HEK293 (cell line): ENCODE measurements at regions of chr1 and their contacts with region 1.

Region 1: DNA sequence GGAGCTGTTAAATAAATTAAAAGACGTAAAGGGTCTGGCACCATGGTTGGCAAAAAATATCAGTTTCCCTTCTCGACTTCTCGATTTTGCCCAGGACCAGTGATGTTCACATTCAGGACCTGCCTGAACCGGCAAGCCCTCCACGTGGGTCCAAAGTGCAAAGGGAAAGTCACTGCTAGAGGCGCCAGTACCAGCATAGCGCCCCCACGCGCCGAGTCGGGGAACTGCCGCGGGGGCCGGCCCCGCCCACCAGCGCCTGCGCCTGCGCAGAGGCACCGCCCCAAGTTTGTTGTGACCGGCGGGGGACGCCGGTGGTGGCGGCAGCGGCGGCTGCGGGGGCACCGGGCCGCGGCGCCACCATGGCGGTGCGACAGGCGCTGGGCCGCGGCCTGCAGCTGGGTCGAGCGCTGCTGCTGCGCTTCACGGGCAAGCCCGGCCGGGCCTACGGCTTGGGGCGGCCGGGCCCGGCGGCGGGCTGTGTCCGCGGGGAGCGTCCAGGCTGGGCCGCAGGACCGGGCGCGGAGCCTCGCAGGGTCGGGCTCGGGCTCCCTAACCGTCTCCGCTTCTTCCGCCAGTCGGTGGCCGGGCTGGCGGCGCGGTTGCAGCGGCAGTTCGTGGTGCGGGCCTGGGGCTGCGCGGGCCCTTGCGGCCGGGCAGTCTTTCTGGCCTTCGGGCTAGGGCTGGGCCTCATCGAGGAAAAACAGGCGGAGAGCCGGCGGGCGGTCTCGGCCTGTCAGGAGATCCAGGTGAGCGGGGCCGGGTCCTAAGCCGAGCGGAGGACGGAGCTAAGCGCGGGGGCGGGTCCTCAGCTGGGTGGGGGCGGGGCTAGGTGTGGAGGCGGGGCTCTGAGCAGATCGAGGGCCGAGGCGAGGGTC is at the start of gene PINK1:
- H3K4me3 ChIP-seq: peak within 1 kb of the TSS; percentile 81
- H3K27ac ChIP-seq: peak within 1 kb of the TSS; percentile 95
- H3K4me1 ChIP-seq: no peaks in the 10 kb centered on the region
- CTCF ChIP-seq: peak; percentile 94

Region 2: DNA sequence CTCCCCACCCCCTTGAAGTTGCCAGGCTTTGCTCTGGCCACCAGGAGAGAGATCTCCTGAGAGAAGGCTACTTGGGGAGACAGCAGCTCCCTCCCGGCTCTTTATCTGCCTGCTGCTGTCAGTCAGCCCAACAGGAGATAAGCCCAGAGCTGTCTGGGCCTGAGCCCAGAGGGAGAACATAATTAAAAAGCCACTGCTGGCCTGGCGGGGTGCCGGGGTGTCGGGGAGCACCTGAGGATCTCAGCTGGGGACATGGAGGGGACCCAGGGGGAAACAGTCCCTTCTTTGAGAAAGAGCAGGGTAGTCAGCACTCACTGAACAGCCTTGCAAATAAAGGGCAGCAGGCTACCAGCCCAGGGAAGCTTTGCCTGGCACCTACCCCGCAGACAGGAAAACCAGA is 324.9 kb before region 1 on chr1:
- CTCF ChIA-PET with region 1: no interaction called
- POLR2A ChIA-PET with region 1: no interaction called
- H3K4me3 ChIP-seq: no peak overlapping the region
- H3K27ac ChIP-seq: no peak overlapping the region
- H3K4me1 ChIP-seq: no peaks in the 10 kb centered on the region
- CTCF ChIP-seq: no peak

Region 3: GRCh38 chr1:20521960-20522861 is 111.2 kb before region 1 on chr1:
- CTCF ChIA-PET with region 1: interaction called, 36 read pairs
- POLR2A ChIA-PET with region 1: interaction called, 3 read pairs
- H3K4me3 ChIP-seq: no peak overlapping the region
- H3K27ac ChIP-seq: no peak overlapping the region
- H3K4me1 ChIP-seq: no peaks in the 10 kb centered on the region
- CTCF ChIP-seq: peak; percentile 88

Region 4: GRCh38 chr1:20574686-20575540 is 58.5 kb before region 1 on chr1:
- CTCF ChIA-PET with region 1: interaction called, 105 read pairs
- POLR2A ChIA-PET with region 1: interaction called, 24 read pairs
- H3K4me3 ChIP-seq: no peak overlapping the region
- H3K27ac ChIP-seq: no peak overlapping the region
- H3K4me1 ChIP-seq: no peaks in the 10 kb centered on the region
- CTCF ChIP-seq: peak; percentile 68

Region 5: GRCh38 chr1:20589331-20590278 is 43.8 kb before region 1 on chr1:
- CTCF ChIA-PET with region 1: interaction called, 12 read pairs
- POLR2A ChIA-PET with region 1: interaction called, 14 read pairs
- H3K4me3 ChIP-seq: no peak overlapping the region
- H3K27ac ChIP-seq: no peak overlapping the region
- H3K4me1 ChIP-seq: peaks cover 3% of the 10 kb centered on the region; the same call in 1 of the 2 replicates
- CTCF ChIP-seq: no peak

Region 6: GRCh38 chr1:20618550-20618949 is 14.9 kb before region 1 on chr1:
- CTCF ChIA-PET with region 1: interaction called, 30 read pairs
- POLR2A ChIA-PET with region 1: interaction called, 7 read pairs
- H3K4me3 ChIP-seq: no peak overlapping the region
- H3K27ac ChIP-seq: no peak overlapping the region
- H3K4me1 ChIP-seq: no peaks in the 10 kb centered on the region
- CTCF ChIP-seq: no peak

Region 7: GRCh38 chr1:20661207-20662109 is 28.0 kb after region 1 on chr1 and contains the start of gene DDOST:
- CTCF ChIA-PET with region 1: interaction called, 12 read pairs
- POLR2A ChIA-PET with region 1: interaction called, 24 read pairs
- H3K4me3 ChIP-seq: peak within 1 kb of the TSS; percentile 81
- H3K27ac ChIP-seq: peak within 1 kb of the TSS; percentile 49; the same call in 1 of the 2 replicates
- H3K4me1 ChIP-seq: no peaks in the 10 kb centered on the region
- CTCF ChIP-seq: peak; percentile 94

Region 8: DNA sequence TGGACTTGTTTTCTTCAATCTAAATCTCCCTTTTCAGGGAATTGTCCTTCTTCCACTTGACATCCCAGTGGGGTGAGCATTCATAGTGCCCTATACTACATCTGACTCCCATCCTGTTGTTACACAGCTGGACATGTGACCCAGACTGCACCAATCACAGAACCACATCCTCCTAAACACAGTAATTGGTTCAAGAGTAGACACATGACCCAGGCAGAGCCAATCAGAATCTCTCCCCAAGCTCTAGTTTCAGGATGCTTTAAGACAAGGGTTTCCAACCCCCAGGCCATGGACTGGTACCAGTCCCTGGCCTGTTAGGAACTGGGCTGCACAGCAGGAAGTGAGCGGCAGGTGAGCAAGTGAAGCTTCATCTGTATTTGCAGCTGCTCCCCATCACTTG is 33.4 kb after region 1 on chr1:
- CTCF ChIA-PET with region 1: interaction called, 12 read pairs
- POLR2A ChIA-PET with region 1: interaction called, 24 read pairs
- H3K4me3 ChIP-seq: no peak overlapping the region
- H3K27ac ChIP-seq: no peak overlapping the region
- H3K4me1 ChIP-seq: no peaks in the 10 kb centered on the region
- CTCF ChIP-seq: no peak

Region 9: GRCh38 chr1:20727384-20728316 is 94.2 kb after region 1 on chr1:
- CTCF ChIA-PET with region 1: no interaction called
- POLR2A ChIA-PET with region 1: no interaction called
- H3K4me3 ChIP-seq: no peak overlapping the region
- H3K27ac ChIP-seq: no peak overlapping the region
- H3K4me1 ChIP-seq: peaks cover 4% of the 10 kb centered on the region
- CTCF ChIP-seq: no peak

Region 10: GRCh38 chr1:21082073-21082472 is 448.6 kb after region 1 on chr1:
- CTCF ChIA-PET with region 1: no interaction called
- POLR2A ChIA-PET with region 1: no interaction called
- H3K4me3 ChIP-seq: no peak overlapping the region
- H3K27ac ChIP-seq: no peak overlapping the region
- H3K4me1 ChIP-seq: peaks cover 6% of the 10 kb centered on the region
- CTCF ChIP-seq: no peak